CD4-positive, alpha-beta T cell (primary cell): ENCODE measurements at regions of chr3 and their contacts with region 1.

Region 1: DNA sequence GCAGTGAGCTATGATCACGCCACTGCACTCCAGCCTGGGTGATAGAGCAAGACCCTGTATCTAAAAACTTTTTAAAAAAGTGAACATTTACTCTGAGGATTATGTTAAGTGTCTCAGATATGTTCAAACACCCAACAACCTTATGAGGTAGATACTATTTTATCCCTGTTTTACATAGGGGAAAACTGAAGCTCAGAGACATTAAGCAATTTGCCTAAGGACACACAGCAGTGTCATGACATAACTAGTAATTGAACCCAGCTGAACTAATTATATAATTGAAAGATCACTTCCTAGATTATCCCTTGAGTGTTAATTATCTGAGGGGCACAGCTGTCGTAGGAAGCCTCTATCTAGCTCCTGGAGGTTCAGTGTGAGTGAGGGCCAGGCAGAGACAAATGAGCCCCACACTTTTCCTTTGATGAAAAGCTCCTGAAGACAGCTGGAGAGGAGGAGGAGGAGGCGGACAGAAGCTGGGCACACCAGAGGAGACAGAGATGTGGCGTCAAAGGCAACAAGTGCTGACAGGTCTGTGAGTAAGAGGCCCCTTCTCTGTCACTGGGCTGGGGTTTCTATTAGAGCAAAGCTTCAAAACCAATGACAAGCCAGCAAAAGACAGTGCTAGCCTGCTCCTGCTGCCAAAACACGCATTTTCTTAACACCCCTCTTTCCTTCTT is 20.5 kb downstream of the TRH start:
- DNase-seq: no peak
- ATAC-seq: no peak
- H3K4me3 ChIP-seq: no peak overlapping the region
- H3K4me3 Mint-ChIP-seq: no peak overlapping the region
- H3K27ac ChIP-seq: no peak overlapping the region
- H3K27ac Mint-ChIP-seq: no peak overlapping the region
- H3K4me1 ChIP-seq: no peaks in the 10 kb centered on the region
- H3K4me1 Mint-ChIP-seq: no peaks in the 10 kb centered on the region
- H3K27me3 ChIP-seq: peaks cover 0 to 3% of the 10 kb centered on the region in 2 experiments
- H3K27me3 Mint-ChIP-seq: peaks cover 22% of the 10 kb centered on the region
- CTCF ChIP-seq: no peak

Region 2: GRCh38 chr3:129238945-129239706 is 755.9 kb before region 1 on chr3:
- CTCF ChIA-PET with region 1: no interaction called
- POLR2A ChIA-PET with region 1: no interaction called
- intact Hi-C with region 1: no loop called
- DNase-seq: peak in 3 of 14 experiments; percentile 58 to 64 (median 60)
- ATAC-seq: no peak
- H3K4me3 ChIP-seq: no peak overlapping the region
- H3K4me3 Mint-ChIP-seq: no peak overlapping the region
- H3K27ac ChIP-seq: peak overlapping the region in 1 of 2 donors; percentile 22
- H3K27ac Mint-ChIP-seq: no peak overlapping the region
- H3K4me1 ChIP-seq: peaks cover 19% of the 10 kb centered on the region
- H3K4me1 Mint-ChIP-seq: peaks cover 6% of the 10 kb centered on the region
- H3K27me3 ChIP-seq: no peaks in the 10 kb centered on the region
- H3K27me3 Mint-ChIP-seq: no peaks in the 10 kb centered on the region
- CTCF ChIP-seq: no peak

Region 3: GRCh38 chr3:129942296-129942695 is 52.7 kb before region 1 on chr3:
- CTCF ChIA-PET with region 1: no interaction called
- POLR2A ChIA-PET with region 1: no interaction called
- intact Hi-C with region 1: loop called in 1 of 2 experiments (anchors 5 kb)
- DNase-seq: peak in 7 of 14 experiments; percentile 7 to 57 (median 13)
- ATAC-seq: peak; percentile 43
- H3K4me3 ChIP-seq: no peak overlapping the region
- H3K4me3 Mint-ChIP-seq: no peak overlapping the region
- H3K27ac ChIP-seq: no peak overlapping the region
- H3K27ac Mint-ChIP-seq: no peak overlapping the region
- H3K4me1 ChIP-seq: no peaks in the 10 kb centered on the region
- H3K4me1 Mint-ChIP-seq: no peaks in the 10 kb centered on the region
- H3K27me3 ChIP-seq: no peaks in the 10 kb centered on the region
- H3K27me3 Mint-ChIP-seq: no peaks in the 10 kb centered on the region
- CTCF ChIP-seq: peak; percentile 12